CD4-positive, alpha-beta T cell (primary cell): ENCODE measurements at regions of chr16 and their contacts with region 1.

Region 1: GRCh38 chr16:53509906-53510703 is 7.1 kb upstream of the AKTIP start:
- DNase-seq: peak in 13 of 14 experiments; percentile 17 to 83 (median 36)
- ATAC-seq: peak; percentile 71
- H3K4me3 ChIP-seq: peak overlapping the region; percentile 33
- H3K4me3 Mint-ChIP-seq: peak overlapping the region; percentile 72
- H3K27ac ChIP-seq: no peak overlapping the region
- H3K27ac Mint-ChIP-seq: peak overlapping the region; percentile 11
- H3K4me1 ChIP-seq: peaks cover 28% of the 10 kb centered on the region
- H3K4me1 Mint-ChIP-seq: peaks cover 35% of the 10 kb centered on the region
- H3K27me3 ChIP-seq: no peaks in the 10 kb centered on the region
- H3K27me3 Mint-ChIP-seq: no peaks in the 10 kb centered on the region
- CTCF ChIP-seq: peak; percentile 97

Region 2: DNA sequence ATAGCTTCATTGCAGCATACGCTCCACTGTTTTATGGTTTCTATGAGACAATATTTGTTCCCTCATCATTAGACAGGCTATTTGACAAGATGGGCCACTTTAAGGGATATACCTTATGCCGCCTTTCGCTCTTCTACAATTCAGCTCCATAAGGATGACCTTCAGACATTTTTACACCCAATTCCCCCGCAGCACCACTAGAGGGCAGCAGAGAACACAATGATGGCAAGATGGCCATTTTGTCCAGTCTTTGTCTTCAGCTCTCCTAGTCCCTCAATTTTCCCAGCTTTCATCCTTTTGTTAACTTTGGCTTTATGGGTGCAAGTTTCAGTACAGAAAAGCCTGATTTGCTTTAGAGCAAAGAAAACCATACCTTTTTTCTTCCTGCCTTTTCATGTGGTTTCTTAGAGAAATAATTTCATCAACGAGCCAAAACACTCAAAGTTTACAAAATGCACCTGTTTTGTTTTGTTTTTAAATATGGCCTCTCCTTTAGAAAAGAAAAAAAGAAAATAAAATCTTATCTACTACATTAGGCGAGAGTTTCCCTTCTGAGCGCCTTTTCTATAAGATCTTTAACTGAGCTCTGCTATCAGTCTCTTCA is 1318.5 kb before region 1 on chr16:
- CTCF ChIA-PET with region 1: no interaction called
- POLR2A ChIA-PET with region 1: no interaction called
- intact Hi-C with region 1: loop called in 1 of 2 experiments (anchors 10 kb)
- DNase-seq: peak; percentile 10 to 63 (median 26)
- ATAC-seq: no peak
- H3K4me3 ChIP-seq: no peak overlapping the region
- H3K4me3 Mint-ChIP-seq: no peak overlapping the region
- H3K27ac ChIP-seq: no peak overlapping the region
- H3K27ac Mint-ChIP-seq: no peak overlapping the region
- H3K4me1 ChIP-seq: no peaks in the 10 kb centered on the region
- H3K4me1 Mint-ChIP-seq: no peaks in the 10 kb centered on the region
- H3K27me3 ChIP-seq: no peaks in the 10 kb centered on the region
- H3K27me3 Mint-ChIP-seq: no peaks in the 10 kb centered on the region
- CTCF ChIP-seq: peak; percentile 89

Region 3: DNA sequence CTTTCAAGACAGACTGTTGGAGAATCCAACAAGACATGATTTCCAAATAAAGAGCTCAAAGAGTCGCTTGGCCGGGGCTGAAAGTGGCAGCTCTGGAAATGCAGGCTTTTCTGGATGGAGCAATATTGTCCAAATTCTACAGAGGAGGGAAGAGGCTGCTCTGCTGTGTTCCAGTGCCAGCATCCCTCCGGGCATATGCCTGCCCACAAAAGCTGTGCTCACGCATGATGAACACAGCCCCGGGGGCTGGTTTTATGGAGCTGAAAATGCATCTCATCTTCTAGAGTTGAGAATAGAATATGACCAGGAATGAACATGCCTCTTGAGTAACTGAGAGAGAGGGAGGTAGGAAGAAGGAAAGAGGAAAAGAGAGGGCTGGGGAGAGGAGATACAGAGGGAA is 888.5 kb before region 1 on chr16:
- CTCF ChIA-PET with region 1: no interaction called
- POLR2A ChIA-PET with region 1: no interaction called
- intact Hi-C with region 1: no loop called
- DNase-seq: no peak
- ATAC-seq: no peak
- H3K4me3 ChIP-seq: no peak overlapping the region
- H3K4me3 Mint-ChIP-seq: no peak overlapping the region
- H3K27ac ChIP-seq: no peak overlapping the region
- H3K27ac Mint-ChIP-seq: no peak overlapping the region
- H3K4me1 ChIP-seq: no peaks in the 10 kb centered on the region
- H3K4me1 Mint-ChIP-seq: no peaks in the 10 kb centered on the region
- H3K27me3 ChIP-seq: no peaks in the 10 kb centered on the region
- H3K27me3 Mint-ChIP-seq: no peaks in the 10 kb centered on the region
- CTCF ChIP-seq: no peak

Region 4: DNA sequence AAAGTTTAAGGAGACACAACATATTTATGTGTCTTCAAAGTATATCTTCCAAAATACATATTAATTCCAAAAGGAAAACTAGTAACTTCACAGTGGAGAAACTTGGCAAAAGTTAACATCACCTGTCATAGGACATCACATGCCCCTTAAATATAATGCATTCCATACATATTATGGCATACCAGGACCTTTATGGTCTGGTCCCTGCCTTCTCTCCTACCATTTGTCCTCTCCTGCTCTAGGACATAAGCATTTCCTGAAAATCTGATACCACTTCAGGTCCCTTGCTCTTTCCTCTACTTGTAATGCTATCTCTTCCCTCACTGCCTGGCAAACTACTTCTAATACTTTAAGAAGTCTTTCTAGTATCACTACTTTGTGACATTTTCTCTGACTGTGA is 243.9 kb before region 1 on chr16:
- CTCF ChIA-PET with region 1: interaction called, 3 read pairs
- POLR2A ChIA-PET with region 1: no interaction called
- intact Hi-C with region 1: loop called in 1 of 2 experiments (anchors 1 kb)
- DNase-seq: no peak
- ATAC-seq: no peak
- H3K4me3 ChIP-seq: no peak overlapping the region
- H3K4me3 Mint-ChIP-seq: no peak overlapping the region
- H3K27ac ChIP-seq: no peak overlapping the region
- H3K27ac Mint-ChIP-seq: no peak overlapping the region
- H3K4me1 ChIP-seq: no peaks in the 10 kb centered on the region
- H3K4me1 Mint-ChIP-seq: no peaks in the 10 kb centered on the region
- H3K27me3 ChIP-seq: no peaks in the 10 kb centered on the region
- H3K27me3 Mint-ChIP-seq: no peaks in the 10 kb centered on the region
- CTCF ChIP-seq: no peak

Region 5: DNA sequence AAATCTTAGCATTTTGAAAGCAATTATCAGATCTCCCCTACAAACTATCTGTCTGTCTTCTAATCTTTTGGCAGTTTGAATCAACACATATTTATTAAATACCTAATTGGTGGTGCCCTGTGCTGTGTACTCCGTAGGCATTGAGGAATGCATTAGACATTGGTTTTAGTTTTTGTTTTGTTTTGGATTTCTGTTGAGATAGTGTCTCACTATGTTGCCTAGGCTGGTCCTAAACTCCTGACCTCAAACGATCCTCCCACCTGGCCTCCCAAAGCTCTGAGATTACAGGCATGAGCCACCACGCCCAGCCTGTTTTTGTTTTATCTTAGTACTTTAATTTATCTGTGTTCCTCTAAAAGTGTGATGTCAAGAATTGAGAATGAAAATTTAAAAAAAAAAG is 200.6 kb before region 1 on chr16:
- CTCF ChIA-PET with region 1: no interaction called
- POLR2A ChIA-PET with region 1: no interaction called
- intact Hi-C with region 1: loop called in 1 of 2 experiments (anchors 5 kb)
- DNase-seq: no peak
- ATAC-seq: no peak
- H3K4me3 ChIP-seq: no peak overlapping the region
- H3K4me3 Mint-ChIP-seq: no peak overlapping the region
- H3K27ac ChIP-seq: no peak overlapping the region
- H3K27ac Mint-ChIP-seq: no peak overlapping the region
- H3K4me1 ChIP-seq: no peaks in the 10 kb centered on the region
- H3K4me1 Mint-ChIP-seq: no peaks in the 10 kb centered on the region
- H3K27me3 ChIP-seq: no peaks in the 10 kb centered on the region
- H3K27me3 Mint-ChIP-seq: no peaks in the 10 kb centered on the region
- CTCF ChIP-seq: no peak

Region 6: GRCh38 chr16:53703590-53704444 is 193.7 kb after region 1 on chr16 and contains the starts of genes FTO and RPGRIP1L:
- CTCF ChIA-PET with region 1: no interaction called
- POLR2A ChIA-PET with region 1: no interaction called
- intact Hi-C with region 1: loop called (anchors 5 to 10 kb)
- DNase-seq: peak; percentile 90 to 99 (median 93)
- ATAC-seq: peak; percentile 89
- H3K4me3 ChIP-seq: peak within 1 kb of the TSS; percentile 87
- H3K4me3 Mint-ChIP-seq: peak within 1 kb of the TSS; percentile 97
- H3K27ac ChIP-seq: peak within 1 kb of the TSS; percentile 53 to 63
- H3K27ac Mint-ChIP-seq: peak within 1 kb of the TSS; percentile 86
- H3K4me1 ChIP-seq: peaks cover 14% of the 10 kb centered on the region
- H3K4me1 Mint-ChIP-seq: peaks cover 37% of the 10 kb centered on the region
- H3K27me3 ChIP-seq: no peaks in the 10 kb centered on the region
- H3K27me3 Mint-ChIP-seq: no peaks in the 10 kb centered on the region
- CTCF ChIP-seq: no peak
- total RNA-seq, gene FTO: 36.3 to 37.9 TPM
- total RNA-seq, gene RPGRIP1L: 2.4 to 2.5 TPM

Region 7: GRCh38 chr16:53755536-53755910 is 245.4 kb after region 1 on chr16:
- CTCF ChIA-PET with region 1: no interaction called
- POLR2A ChIA-PET with region 1: no interaction called
- intact Hi-C with region 1: no loop called
- DNase-seq: no peak
- ATAC-seq: no peak
- H3K4me3 ChIP-seq: no peak overlapping the region
- H3K4me3 Mint-ChIP-seq: no peak overlapping the region
- H3K27ac ChIP-seq: no peak overlapping the region
- H3K27ac Mint-ChIP-seq: no peak overlapping the region
- H3K4me1 ChIP-seq: no peaks in the 10 kb centered on the region
- H3K4me1 Mint-ChIP-seq: peaks cover 14% of the 10 kb centered on the region
- H3K27me3 ChIP-seq: no peaks in the 10 kb centered on the region
- H3K27me3 Mint-ChIP-seq: no peaks in the 10 kb centered on the region
- CTCF ChIP-seq: no peak